GM18951 (cell line): ENCODE measurements at regions of chr15 and their contacts with region 1.

Region 1: GRCh38 chr15:57337868-57338411 is 38.4 kb upstream of the CGNL1 start:
- POLR2A ChIP-seq: no peak

Region 2: GRCh38 chr15:57462381-57462780 is 124.4 kb after region 1 on chr15:
- in situ Hi-C with region 1: no loop called
- POLR2A ChIP-seq: no peak

Region 3: DNA sequence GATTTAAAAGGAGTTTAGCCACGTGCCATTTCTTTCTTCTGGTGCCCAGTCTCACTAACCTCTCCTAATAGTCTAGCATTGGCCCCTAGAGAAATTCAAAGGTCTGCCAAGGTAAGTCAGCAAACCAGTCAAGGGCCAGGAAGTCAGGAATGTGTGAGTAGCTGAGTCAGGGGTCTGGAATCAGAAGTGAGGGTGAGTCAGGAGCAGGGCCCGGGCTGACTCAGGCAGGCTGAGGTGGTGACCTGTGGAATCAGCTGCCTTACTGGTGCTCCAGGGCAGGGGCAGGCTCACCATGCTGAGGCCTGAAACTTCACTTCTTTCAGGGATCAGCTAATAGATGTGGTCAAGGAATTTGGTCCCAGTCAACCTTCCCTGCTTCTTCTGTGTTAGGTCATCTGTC is 147.9 kb after region 1 on chr15:
- in situ Hi-C with region 1: no loop called
- POLR2A ChIP-seq: no peak

Region 4: GRCh38 chr15:57527382-57528091 is 189.6 kb after region 1 on chr15:
- in situ Hi-C with region 1: loop called (anchors 5 kb)
- POLR2A ChIP-seq: no peak

Region 5: DNA sequence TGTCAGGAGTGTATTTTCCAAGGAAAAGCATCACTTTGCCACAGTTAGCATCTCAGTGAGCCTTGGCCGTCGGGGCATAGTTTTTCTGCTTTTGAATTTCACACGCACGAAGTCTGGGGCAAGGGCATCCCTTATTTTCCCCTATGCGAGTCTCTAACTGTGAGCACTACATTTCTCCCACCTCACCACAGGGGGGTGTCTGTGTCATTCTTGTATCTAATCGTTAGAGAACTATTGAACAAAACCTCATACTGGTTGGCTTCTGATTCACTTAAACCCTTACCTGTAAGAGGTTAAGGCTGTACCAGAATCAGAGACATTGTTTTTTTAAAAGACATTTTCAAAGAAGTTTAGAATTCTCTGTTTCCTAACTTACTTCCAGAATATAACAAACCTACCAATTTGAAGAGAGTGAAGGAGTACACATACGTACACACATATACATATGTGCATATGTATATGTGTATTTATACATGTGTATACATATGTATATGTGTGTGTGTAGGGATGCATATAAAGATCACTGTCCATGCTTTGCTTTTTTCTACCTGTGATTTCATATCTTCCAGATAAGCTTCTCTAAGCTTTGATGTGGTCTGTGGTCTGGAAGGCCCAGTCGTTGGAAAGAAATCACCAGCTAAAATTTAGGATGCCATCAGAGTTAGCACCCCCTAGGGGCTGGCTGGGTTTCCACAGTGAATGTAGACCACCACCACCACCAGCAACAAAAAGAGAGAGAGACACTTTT is 303.2 kb after region 1 on chr15:
- in situ Hi-C with region 1: no loop called
- POLR2A ChIP-seq: no peak